ENCODE measurements at regions of chr17 and their contacts with region 1.

Region 1: DNA sequence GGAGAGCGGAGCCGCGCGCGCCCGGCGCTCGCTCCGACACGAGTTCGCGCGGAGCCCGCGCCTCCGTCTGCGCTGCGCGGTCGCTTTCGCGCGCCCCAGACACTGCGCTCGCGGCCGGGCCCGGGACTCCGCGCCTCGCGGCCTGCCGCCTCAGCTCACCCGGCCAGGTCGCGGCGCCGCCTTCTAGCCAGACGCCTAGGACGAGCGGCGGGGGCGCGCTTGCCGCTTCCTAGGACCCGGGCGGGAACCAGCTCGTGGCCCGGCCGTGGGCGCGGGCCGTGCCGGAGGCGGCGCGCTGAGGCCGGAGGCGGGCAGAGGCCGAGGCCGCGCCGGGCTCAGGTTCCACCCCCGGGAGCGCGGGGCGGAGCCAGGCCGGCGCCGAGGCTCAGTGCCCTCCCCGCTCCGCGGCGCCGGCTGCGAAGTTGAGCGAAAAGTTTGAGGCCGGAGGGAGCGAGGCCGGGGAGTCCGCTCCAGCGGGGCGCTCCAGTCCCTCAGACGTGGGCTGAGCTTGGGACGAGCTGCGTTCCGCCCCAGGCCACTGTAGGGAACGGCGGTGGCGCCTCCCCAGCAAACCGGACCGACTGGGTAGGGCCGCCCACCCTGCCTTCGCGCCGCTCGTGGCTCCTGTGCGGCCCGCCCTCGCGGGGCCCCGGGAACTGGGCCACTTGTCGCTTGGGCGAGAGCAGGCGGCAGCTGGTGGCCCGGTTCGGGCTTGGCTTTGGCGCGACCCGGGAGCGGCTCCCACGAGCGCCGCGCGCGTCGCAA is at the start of gene SPHK1:
- DNase-seq: peak; percentile 77
- ATAC-seq: peak; percentile 75
- H3K4me3 Mint-ChIP-seq: peak within 1 kb of the TSS; percentile 86
- H3K27ac Mint-ChIP-seq: peak within 1 kb of the TSS; percentile 71
- H3K4me1 Mint-ChIP-seq: peaks cover 15% of the 10 kb centered on the region
- H3K27me3 Mint-ChIP-seq: peaks cover 2% of the 10 kb centered on the region
- CTCF ChIP-seq: no peak
- total RNA-seq, gene SPHK1: 1.1 and 1.3 TPM in 2 replicates

Region 2: GRCh38 chr17:76072148-76072858 is 312.1 kb before region 1 on chr17 and contains the start of gene SRP68:
- CTCF ChIA-PET with region 1: no interaction called
- POLR2A ChIA-PET with region 1: no interaction called
- intact Hi-C with region 1: loop called (anchors 5 kb)
- DNase-seq: peak; percentile 79
- ATAC-seq: peak; percentile 92
- H3K4me3 Mint-ChIP-seq: peak within 1 kb of the TSS; percentile 94
- H3K27ac Mint-ChIP-seq: peak within 1 kb of the TSS; percentile 90
- H3K4me1 Mint-ChIP-seq: peaks cover 45% of the 10 kb centered on the region
- H3K27me3 Mint-ChIP-seq: peaks cover 26% of the 10 kb centered on the region
- CTCF ChIP-seq: no peak
- total RNA-seq, gene SRP68: 73.7 and 76.1 TPM in 2 replicates

Region 3: GRCh38 chr17:76103274-76104139 is 280.9 kb before region 1 on chr17 and contains the start of gene EXOC7:
- CTCF ChIA-PET with region 1: no interaction called
- POLR2A ChIA-PET with region 1: no interaction called
- intact Hi-C with region 1: loop called (anchors 10 kb)
- DNase-seq: peak; percentile 95
- ATAC-seq: peak; percentile 97
- H3K4me3 Mint-ChIP-seq: peak within 1 kb of the TSS; percentile 98
- H3K27ac Mint-ChIP-seq: peak within 1 kb of the TSS; percentile 91
- H3K4me1 Mint-ChIP-seq: peaks cover 20% of the 10 kb centered on the region
- H3K27me3 Mint-ChIP-seq: no peaks in the 10 kb centered on the region
- CTCF ChIP-seq: no peak
- total RNA-seq, gene EXOC7: 133 and 146 TPM in 2 replicates

Region 4: DNA sequence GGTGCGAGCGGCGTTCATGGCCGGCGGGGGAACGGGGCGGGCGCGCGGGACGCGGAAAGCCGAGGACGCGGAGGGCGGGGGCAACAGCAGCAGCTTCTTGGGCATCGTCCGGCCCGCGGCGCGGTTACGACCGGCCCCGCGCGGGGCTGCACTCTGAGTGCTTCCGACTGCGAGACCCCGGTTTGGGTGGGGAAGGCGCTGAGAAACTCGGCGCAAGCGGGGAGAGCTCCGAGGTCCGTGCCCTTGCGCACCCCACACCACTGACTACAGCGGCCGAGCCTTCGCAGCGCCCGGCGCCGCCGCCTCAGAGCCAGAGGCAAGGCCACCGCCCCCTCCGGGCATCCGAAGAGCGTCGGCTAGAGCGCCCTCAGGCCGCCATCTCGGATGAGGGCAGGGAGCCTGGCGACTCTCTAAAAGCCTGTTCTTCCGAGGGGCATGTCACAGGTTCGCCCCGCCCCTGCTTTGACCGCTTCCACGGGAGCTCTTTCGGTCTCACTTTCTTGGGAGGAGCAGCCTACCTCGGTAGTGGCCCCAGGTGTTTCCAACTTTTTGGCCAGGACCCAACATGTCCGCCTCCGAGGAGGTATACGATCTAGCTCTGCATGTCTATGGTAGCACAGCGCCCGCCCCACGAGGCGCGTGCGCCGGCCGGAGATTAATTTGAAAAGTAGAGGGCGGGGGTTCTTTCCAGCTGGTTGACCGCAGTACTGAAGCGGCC is 30.6 kb before region 1 on chr17 and contains the start of gene PRPSAP1:
- CTCF ChIA-PET with region 1: interaction called, 23 read pairs
- POLR2A ChIA-PET with region 1: interaction called, 29 read pairs
- intact Hi-C with region 1: loop called (anchors 1 kb)
- DNase-seq: peak; percentile 83
- ATAC-seq: peak; percentile 93
- H3K4me3 Mint-ChIP-seq: peak within 1 kb of the TSS; percentile 94
- H3K27ac Mint-ChIP-seq: peak within 1 kb of the TSS; percentile 98
- H3K4me1 Mint-ChIP-seq: peaks cover 23% of the 10 kb centered on the region
- H3K27me3 Mint-ChIP-seq: no peaks in the 10 kb centered on the region
- CTCF ChIP-seq: no peak
- total RNA-seq, gene PRPSAP1: 26.7 and 27.1 TPM in 2 replicates

Region 5: DNA sequence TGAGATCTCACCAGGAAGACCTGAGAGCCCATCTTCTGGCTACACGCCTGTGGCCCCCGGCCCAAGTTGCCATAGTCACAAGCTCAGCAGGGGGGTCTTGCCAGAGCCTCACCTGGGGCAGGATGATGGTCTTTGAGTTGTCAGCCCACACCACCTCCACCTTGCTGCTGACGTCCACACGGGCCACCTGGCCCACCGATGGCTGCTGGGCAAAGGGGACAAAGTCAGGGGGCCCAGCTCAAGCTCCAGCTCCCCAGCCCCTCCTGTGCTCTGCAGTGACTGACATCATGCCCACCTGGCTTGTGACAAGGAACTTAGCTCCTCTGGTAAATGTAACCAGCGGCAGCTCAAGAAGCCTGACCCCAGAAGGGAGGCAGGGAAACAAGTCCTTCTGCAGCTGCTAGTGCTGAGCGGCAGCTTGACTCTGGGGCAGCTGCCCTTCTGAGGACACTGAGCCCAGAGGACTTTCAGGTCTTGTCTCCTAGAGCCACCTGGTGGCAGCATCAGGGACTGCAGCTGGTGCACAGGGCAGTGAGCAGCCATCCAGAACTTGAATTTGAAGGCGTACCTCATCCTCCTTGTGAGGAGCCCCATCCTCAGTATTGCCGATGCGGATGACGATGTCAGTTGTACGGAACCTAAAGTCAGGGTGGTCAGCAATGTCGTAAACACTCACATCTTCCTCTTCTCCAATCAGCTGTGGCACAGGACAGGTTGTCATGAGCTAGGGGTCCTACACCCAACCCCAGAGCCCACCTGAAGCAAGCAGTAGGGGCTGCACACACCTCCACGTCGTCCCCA is 13.5 kb after region 1 on chr17:
- CTCF ChIA-PET with region 1: interaction called, 29 read pairs
- POLR2A ChIA-PET with region 1: interaction called, 5 read pairs
- intact Hi-C with region 1: no loop called
- DNase-seq: peak; percentile 79
- ATAC-seq: peak; percentile 93
- H3K4me3 Mint-ChIP-seq: no peak overlapping the region
- H3K27ac Mint-ChIP-seq: no peak overlapping the region
- H3K4me1 Mint-ChIP-seq: peaks cover 3% of the 10 kb centered on the region
- H3K27me3 Mint-ChIP-seq: no peaks in the 10 kb centered on the region
- CTCF ChIP-seq: peak; percentile 98